Activated naive CD4-positive, alpha-beta T cell treated with anti-CD3 and anti-CD28 coated beads for 36 hours (primary cell): ENCODE measurements at regions of chrX and their contacts with region 1.

Region 1: DNA sequence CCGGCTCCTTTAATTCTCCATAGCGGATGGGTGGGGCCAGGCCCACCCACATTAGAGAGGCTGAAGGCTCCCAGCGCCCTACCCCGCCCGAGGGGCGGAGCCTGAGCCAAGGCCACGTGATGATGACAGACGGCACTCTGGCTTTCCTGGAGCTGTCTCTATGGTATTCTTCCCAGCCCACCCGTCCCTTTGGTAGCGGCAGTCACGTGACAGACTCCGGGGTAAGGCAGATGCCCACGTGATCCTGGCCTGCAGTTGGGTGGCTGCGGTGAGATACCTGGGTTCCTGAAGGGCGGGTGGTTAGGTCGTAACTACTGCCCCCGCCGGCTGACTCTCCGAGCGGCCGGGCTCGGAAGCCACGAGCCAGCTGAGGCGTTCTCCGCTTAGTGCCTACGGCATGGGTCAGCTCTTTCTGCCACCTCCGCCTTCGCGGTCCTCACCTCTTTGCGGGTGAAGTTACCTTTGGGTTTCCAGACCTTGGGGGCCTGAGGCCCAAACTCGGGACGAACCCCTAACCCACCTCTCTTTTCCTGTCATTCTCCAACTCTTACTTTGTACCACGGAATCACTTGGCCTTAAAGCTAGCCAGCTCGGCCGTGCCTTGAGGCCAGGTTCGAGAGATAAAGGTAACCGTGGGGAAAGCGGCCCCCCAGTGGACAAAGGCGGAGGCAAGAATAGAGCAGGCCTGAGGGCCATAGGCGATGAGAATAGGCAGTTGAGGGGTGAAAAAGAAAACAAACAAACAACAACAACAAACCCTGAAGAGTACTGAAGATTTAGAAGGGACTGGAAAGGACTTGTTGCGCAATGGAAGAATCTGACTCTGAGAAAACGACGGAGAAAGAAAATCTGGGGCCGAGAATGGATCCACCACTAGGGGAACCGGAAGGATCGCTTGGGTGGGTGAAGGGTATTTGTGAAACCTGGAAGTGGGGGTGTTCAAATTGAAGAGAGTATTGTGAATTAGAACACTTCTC is at the start of gene RRAGB:
- DNase-seq: peak; percentile 91
- H3K4me3 Mint-ChIP-seq: peak within 1 kb of the TSS; percentile 80
- H3K27ac Mint-ChIP-seq: peak within 1 kb of the TSS; percentile 91
- H3K4me1 Mint-ChIP-seq: peaks cover 32% of the 10 kb centered on the region
- H3K27me3 Mint-ChIP-seq: no peaks in the 10 kb centered on the region
- total RNA-seq, gene RRAGB: 3.4 to 4.0 TPM

Region 2: DNA sequence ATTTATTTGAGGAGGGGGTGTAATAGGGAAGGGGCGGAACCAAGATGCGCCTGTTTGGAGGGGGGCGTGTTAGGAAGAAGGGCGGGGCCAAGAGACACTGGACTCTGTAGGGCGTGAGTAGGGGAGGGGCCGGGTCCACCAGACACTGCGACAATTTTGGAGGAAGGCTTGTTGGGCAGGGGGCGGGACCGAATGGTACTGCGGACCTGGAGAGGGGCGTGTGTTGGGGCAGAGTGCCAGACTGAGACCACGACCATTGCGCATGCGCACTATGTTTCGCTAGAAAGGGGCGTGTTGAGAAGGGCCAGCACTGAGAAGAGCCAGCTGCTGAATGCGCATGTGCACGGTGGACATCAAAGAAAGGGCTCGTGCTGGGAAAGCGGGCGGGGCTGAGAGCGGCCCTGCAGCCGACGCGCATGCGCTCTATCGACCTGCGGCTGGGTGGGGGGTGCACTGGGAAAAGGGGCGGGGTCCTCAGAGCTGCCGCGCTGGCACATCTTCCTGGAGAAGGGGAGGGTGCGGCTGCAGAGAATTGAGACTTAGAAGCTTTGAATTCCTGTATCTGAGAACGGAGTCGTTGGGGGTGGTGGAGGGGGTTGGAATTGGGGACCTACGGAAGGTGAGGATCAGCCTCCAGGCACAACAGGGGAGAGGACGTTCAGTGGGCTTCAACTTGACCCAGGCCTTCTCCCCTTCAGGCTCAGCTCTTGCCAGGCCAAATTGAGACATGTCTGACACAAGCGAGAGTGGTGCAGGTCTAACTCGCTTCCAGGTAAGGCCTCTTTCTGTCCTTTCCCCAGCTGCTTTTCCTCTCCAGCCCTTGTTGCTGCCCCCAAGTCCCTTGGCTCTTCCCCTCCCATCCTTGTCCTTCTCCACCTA is 909.0 kb before region 1 on chrX:
- CTCF ChIA-PET with region 1: no interaction called
- intact Hi-C with region 1: loop called (anchors 10 kb)
- DNase-seq: peak; percentile 92
- H3K4me3 Mint-ChIP-seq: peak overlapping the region; percentile 88
- H3K27ac Mint-ChIP-seq: peak overlapping the region; percentile 88
- H3K4me1 Mint-ChIP-seq: peaks cover 15% of the 10 kb centered on the region
- H3K27me3 Mint-ChIP-seq: no peaks in the 10 kb centered on the region

Region 3: DNA sequence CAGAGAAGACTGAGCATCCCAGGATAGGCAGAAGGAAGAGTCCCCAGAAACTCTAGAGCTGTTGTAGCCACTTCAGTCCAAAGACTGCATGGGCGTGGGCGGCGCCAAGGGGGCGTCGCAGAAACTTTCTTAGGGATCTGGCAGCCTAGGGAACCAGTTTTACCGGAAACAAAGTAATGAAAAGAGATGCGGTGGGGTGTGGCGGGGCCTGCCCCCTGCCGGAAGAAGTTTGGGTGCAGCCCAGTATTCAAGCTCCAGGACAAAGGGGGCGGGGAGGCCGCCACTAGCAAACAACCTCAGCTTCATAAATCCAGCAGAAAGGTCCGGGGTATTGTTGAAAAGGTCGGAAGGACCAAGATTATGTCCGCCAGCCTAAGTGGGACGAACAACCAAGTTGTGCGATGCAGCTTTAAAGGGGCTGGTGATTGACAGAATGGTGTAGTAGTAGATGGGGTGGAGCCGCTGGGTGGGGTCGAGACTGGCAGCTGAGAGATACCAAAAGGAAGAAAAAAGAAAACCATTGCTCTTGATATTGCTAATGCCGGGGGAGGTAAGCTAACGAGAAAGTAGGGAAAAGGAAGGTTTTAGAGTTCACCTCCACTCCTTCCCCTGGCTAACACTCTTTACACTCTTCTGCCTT is 190.3 kb after region 1 on chrX:
- CTCF ChIA-PET with region 1: no interaction called
- intact Hi-C with region 1: loop called (anchors 1 kb)
- DNase-seq: peak; percentile 67
- H3K4me3 Mint-ChIP-seq: peak overlapping the region; percentile 75
- H3K27ac Mint-ChIP-seq: peak overlapping the region; percentile 57
- H3K4me1 Mint-ChIP-seq: peaks cover 7% of the 10 kb centered on the region
- H3K27me3 Mint-ChIP-seq: no peaks in the 10 kb centered on the region

Region 4: GRCh38 chrX:56232221-56233082 is 514.6 kb after region 1 on chrX and contains the start of gene KLF8:
- CTCF ChIA-PET with region 1: no interaction called
- intact Hi-C with region 1: loop called (anchors 10 kb)
- DNase-seq: peak; percentile 56
- H3K4me3 Mint-ChIP-seq: peak within 1 kb of the TSS; percentile 74
- H3K27ac Mint-ChIP-seq: no peak within 1 kb of the TSS
- H3K4me1 Mint-ChIP-seq: no peaks in the 10 kb centered on the region
- H3K27me3 Mint-ChIP-seq: no peaks in the 10 kb centered on the region
- total RNA-seq, gene KLF8: 1.0 to 1.3 TPM